ENCODE measurements at regions of chr19 and their contacts with region 1.

Region 1: DNA sequence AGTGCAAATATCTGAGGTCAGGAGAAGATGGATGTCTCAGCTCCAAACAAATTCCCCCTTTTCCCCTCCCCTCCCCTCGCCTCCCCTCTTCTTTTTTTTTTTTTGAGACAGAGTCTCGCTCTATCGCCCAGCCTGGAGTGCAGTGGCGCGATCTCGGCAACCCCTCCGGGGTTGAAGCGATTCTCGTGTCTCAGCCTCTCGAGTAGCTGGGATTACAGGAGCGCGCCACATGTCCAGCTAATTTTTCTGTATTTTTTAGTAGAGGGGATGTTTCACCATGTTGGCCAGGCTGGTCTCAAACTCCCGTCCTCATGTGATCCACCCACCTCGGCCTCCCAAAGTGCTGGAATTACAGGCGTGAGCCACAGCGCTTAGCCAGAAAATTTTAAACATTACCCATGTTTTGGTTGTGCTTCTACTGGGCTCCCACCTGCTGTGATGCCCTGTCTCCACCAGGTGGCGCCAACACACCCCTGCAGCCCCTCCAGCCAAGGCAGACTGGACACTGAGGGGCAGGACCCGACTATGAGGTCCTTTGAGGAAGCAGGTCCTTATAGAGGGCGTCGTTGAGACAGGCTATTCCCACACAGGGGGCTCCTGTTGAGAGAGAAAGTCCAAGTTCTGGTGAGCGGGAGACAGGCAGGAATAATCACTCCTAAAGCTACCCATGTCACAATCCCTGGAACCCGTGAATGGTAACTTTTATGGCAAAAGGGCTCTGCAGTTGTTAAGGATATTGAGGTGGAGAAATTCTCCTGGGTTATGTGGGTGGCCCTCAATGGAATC is 6.3 kb downstream of the ERICH4 start:
- DNase-seq: peak; percentile 41 to 72
- H3K4me3 ChIP-seq: no peak overlapping the region
- H3K27ac ChIP-seq: no peak overlapping the region
- H3K4me1 ChIP-seq: no peaks in the 10 kb centered on the region
- H3K27me3 ChIP-seq: peaks cover 60% of the 10 kb centered on the region
- CTCF ChIP-seq: peak; percentile 98

Region 2: GRCh38 chr19:41563854-41564514 is 114.7 kb after region 1 on chr19:
- CTCF ChIA-PET with region 1: interaction called, 8 read pairs
- POLR2A ChIA-PET with region 1: interaction called, 18 read pairs
- intact Hi-C with region 1: loop called (anchors 1 kb)
- DNase-seq: no peak
- H3K4me3 ChIP-seq: no peak overlapping the region
- H3K27ac ChIP-seq: no peak overlapping the region
- H3K4me1 ChIP-seq: no peaks in the 10 kb centered on the region
- H3K27me3 ChIP-seq: peaks cover 55% of the 10 kb centered on the region
- CTCF ChIP-seq: no peak

Region 3: DNA sequence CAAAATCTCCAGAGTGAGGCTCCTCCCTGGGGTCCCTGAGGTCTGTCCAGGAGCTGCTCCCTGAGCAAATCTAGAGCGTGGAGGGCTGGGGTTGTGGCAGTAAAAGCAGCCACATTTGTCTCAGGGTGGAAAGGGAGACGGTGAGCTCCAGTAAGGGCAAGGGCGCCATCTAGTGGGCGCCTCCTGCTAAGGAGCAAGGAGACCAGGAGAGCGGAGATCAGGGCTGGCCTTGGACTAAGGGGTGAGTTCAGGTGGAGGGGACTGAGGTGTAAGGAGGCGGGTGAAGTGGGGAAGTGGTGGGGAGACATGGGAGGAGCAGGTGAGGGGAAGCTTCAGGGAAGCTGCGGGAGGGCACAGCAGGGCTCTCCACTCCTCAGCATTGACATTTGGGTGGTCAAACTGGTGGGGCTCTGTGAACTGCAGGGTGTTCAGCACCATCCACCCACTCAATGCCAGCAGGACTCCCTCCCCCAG is 121.4 kb after region 1 on chr19:
- CTCF ChIA-PET with region 1: interaction called, 8 read pairs
- POLR2A ChIA-PET with region 1: interaction called, 18 read pairs
- intact Hi-C with region 1: loop called (anchors 1 kb)
- DNase-seq: peak in 1 of 2 experiments; percentile 69
- H3K4me3 ChIP-seq: no peak overlapping the region
- H3K27ac ChIP-seq: no peak overlapping the region
- H3K4me1 ChIP-seq: no peaks in the 10 kb centered on the region
- H3K27me3 ChIP-seq: peaks cover 57% of the 10 kb centered on the region
- CTCF ChIP-seq: peak; percentile 93

Region 4: GRCh38 chr19:41597600-41598041 is 148.3 kb after region 1 on chr19:
- CTCF ChIA-PET with region 1: interaction called, 3 read pairs
- POLR2A ChIA-PET with region 1: no interaction called
- intact Hi-C with region 1: loop called (anchors 1 kb)
- DNase-seq: peak; percentile 51 to 60
- H3K4me3 ChIP-seq: no peak overlapping the region
- H3K27ac ChIP-seq: no peak overlapping the region
- H3K4me1 ChIP-seq: no peaks in the 10 kb centered on the region
- H3K27me3 ChIP-seq: peaks cover 21% of the 10 kb centered on the region
- CTCF ChIP-seq: peak; percentile 97

Region 5: GRCh38 chr19:41821003-41821735 is 371.9 kb after region 1 on chr19:
- CTCF ChIA-PET with region 1: no interaction called
- POLR2A ChIA-PET with region 1: no interaction called
- intact Hi-C with region 1: loop called (anchors 5 kb)
- DNase-seq: peak; percentile 45 to 47
- H3K4me3 ChIP-seq: no peak overlapping the region
- H3K27ac ChIP-seq: no peak overlapping the region
- H3K4me1 ChIP-seq: no peaks in the 10 kb centered on the region
- H3K27me3 ChIP-seq: 0 out of 2 replicates have a peak, but pooled peaks cover 5% of the 10 kb centered on the region
- CTCF ChIP-seq: peak; percentile 87

Region 6: DNA sequence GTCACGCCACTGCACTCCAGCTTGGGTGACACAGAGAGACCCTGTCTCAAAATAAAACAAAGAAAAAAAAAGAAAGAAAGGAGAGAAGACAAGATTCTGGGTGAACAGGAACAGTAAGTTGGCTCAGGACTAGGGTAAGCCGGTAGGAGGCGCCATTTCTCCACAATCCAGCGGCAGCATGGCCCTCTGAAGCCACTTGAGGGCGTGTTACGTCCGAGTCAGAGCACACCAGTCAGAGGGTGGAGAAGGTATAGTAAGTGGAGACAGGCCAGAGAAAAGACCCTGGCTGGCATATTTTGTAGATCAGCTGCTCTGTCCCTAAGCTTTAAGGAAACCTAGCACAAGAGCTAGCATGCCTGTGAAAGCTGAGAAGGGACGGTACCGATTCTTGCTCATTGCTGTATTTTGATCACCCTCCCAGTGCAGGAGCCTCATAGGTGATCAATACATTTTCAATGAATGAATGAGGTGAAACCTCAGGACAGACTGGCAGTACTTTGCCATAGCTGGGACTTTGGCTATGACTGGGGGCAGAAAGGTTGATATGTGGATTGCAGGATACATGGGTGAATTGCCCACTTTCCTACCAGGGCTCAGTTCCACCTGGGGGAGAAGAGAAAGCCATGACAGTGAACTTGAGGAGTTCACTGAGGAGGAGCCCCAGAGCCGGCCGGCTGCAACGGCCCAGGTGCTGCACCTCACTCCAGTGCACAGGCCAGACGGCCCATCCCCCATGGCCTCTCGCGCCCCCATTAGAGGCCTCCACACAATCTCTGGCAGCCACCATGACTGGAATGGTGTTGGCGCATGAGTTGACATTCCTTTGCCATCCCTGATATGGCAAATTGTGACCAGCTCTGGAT is 659.5 kb after region 1 on chr19:
- CTCF ChIA-PET with region 1: interaction called, 18 read pairs
- POLR2A ChIA-PET with region 1: no interaction called
- intact Hi-C with region 1: no loop called
- DNase-seq: peak; percentile 70 to 83
- H3K4me3 ChIP-seq: no peak overlapping the region
- H3K27ac ChIP-seq: no peak overlapping the region
- H3K4me1 ChIP-seq: peaks cover 14% of the 10 kb centered on the region
- H3K27me3 ChIP-seq: no peaks in the 10 kb centered on the region
- CTCF ChIP-seq: peak; percentile 98